ENCODE measurements at regions of chr10 and their contacts with region 1.

Region 1: GRCh38 chr10:73810735-73811465 is 498 bp downstream of the NDST2 start:
- DNase-seq: peak; percentile 24
- H3K4me3 ChIP-seq: peak overlapping the region; percentile 97
- H3K27ac ChIP-seq: peak overlapping the region; percentile 93
- H3K4me1 ChIP-seq: no peaks in the 10 kb centered on the region
- H3K27me3 ChIP-seq: no peaks in the 10 kb centered on the region
- CTCF ChIP-seq: no peak

Region 2: DNA sequence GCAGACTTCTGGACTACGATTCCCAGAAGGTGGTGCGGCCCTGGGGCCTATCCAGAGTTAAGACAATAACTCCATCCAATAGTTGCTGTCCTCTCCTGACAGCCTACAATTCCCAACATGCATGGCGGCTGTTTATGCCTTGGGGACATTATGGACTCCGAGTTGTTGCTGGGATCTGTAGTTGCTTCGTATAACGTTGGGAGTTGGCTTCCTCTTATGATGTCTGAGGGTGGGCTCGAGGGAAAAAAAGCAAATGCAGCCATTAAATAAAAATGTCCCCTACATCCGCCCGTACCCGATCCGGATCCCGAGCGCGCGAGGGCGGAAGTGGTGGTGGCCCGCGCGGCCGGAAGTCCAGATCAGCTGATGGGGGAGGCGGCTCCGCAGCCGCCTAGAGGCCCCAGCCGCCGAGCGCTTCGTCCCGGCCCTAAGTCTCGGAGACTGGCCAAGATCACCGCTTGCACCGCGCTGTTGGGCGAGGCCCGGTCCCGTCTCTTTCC is 25.6 kb before region 1 on chr10 and contains the start of gene ZSWIM8:
- CTCF ChIA-PET with region 1: no interaction called
- POLR2A ChIA-PET with region 1: no interaction called
- intact Hi-C with region 1: loop called (anchors 1 kb)
- DNase-seq: peak; percentile 97
- H3K4me3 ChIP-seq: peak within 1 kb of the TSS; percentile 98
- H3K27ac ChIP-seq: peak within 1 kb of the TSS; percentile 66
- H3K4me1 ChIP-seq: peaks cover 12% of the 10 kb centered on the region
- H3K27me3 ChIP-seq: no peaks in the 10 kb centered on the region
- CTCF ChIP-seq: no peak
- total RNA-seq, gene ZSWIM8: 71.3 and 81.1 TPM in 2 replicates